AG04449 (cell line): ENCODE measurements at regions of chr14 and their contacts with region 1.

Region 1: GRCh38 chr14:103391048-103391447 is 5.8 kb downstream of the MARK3 start:
- DNase-seq: no peak
- H3K4me3 ChIP-seq: no peak overlapping the region
- CTCF ChIP-seq: peak; percentile 19

Region 2: DNA sequence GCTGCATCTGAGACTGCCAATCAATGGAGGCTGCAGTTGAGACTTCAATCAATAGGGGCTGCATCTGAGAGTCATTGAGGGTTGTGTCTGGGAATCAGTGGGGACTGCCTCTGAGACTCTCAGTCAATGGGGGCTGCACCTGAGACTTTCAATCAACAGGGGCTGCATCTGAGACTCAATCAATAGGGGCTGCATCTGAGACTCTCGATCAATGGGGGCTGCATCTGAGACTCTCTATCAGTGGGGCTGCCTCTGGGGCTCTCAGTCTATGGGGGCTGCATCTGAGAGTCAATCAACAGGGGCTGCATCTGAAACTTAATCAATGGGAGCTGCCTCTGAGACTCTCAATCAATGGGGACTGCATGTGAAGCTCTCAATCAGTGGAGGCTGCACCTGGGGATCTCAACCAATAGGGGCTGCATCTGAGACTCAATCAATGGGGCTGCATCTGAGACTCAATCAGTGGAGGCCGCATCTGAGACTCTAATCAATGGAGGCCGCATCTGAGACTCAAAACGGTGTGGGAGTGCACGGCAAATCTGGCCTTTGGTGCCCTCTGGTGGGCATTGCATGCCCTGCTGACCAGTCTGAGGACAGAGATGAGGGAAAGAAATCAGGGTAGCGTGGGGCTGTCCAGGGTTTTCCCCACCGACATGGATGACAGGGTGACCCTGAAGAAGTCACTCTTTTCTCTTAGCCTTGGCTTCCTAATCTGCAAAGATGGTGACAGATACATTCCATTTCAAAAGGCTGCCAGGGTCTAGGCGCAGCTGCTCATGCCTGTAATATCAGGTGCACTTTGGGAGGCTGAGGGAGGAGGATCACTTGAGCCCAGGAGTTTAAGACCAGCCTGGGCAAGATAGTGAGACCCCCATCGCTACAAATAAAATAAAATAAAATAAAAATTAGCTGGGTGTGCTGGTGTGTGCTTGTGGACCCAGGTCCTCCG is 98.3 kb before region 1 on chr14:
- CTCF ChIA-PET with region 1: interaction called, 10 read pairs
- POLR2A ChIA-PET with region 1: no interaction called
- DNase-seq: no peak
- H3K4me3 ChIP-seq: no peak overlapping the region
- CTCF ChIP-seq: peak; percentile 92

Region 3: GRCh38 chr14:103346286-103346685 is 44.8 kb before region 1 on chr14:
- CTCF ChIA-PET with region 1: interaction called, 11 read pairs
- POLR2A ChIA-PET with region 1: no interaction called
- DNase-seq: no peak
- H3K4me3 ChIP-seq: no peak overlapping the region
- CTCF ChIP-seq: no peak

Region 4: GRCh38 chr14:103367995-103368394 is 23.1 kb before region 1 on chr14:
- CTCF ChIA-PET with region 1: interaction called, 116 read pairs
- POLR2A ChIA-PET with region 1: no interaction called
- DNase-seq: no peak
- H3K4me3 ChIP-seq: no peak overlapping the region
- CTCF ChIP-seq: no peak

Region 5: DNA sequence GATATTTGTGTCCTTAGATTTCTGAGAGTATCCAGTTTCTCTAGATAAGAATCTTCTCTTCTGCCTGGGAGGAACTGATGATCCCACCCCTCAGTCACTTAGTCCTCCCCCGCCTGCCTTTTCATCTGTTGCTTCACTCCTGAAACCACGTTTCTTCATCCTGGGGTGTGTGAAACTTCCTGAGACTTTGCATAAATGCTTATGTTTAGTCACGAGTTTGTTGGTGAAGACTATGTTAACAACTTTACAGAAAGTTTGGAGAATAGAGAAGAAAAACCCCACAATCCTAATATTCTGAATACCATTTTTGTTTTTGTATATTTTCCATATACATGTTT is 27.4 kb after region 1 on chr14:
- CTCF ChIA-PET with region 1: interaction called, 111 read pairs
- POLR2A ChIA-PET with region 1: no interaction called
- DNase-seq: peak; percentile 61
- H3K4me3 ChIP-seq: no peak overlapping the region
- CTCF ChIP-seq: no peak